ENCODE measurements at regions of chr15 and their contacts with region 1.

Region 1: GRCh38 chr15:78872972-78873792 is 492 bp downstream of the MORF4L1 start:
- DNase-seq: peak; percentile 96
- ATAC-seq: peak; percentile 76
- H3K4me3 Mint-ChIP-seq: peak overlapping the region; percentile 89
- H3K27ac Mint-ChIP-seq: peak overlapping the region; percentile 100
- H3K4me1 Mint-ChIP-seq: peaks cover 30% of the 10 kb centered on the region
- H3K27me3 Mint-ChIP-seq: no peaks in the 10 kb centered on the region
- CTCF ChIP-seq: peak; percentile 29

Region 2: DNA sequence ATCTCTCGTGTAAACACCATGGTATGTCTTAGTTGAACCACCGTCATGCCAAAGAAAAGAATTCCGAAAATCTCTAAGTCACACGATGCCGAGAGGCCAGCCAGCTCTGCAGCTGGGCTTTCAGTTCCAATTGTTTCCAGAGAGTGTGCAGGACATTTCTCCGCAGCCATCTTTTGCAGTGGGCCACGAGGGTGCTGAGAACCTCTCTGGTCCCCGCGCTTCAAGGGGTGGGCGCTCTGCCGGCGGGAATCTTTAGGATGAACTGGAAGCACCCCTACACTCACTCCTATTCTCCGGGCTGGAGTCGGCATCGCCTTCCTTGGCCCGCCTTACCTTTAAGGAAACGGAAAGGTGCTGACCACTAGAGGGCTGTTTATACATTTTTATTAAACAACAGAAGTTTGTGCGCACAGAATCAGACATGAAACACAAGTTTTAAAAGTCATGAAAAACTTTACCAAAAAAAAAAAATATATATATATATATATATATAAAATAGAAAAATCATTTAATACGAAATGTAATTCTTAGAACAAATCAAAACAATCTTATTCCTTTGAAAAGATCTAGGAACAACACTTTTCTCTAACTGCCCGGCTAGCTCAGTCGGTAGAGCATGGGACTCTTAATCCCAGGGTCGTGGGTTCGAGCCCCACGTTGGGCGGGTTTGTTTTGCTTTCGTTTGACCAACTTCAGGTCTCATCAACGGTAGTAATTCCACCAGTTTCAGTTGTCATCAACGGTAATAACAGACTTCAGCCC is 13.0 kb before region 1 on chr15:
- CTCF ChIA-PET with region 1: interaction called, 15 read pairs
- POLR2A ChIA-PET with region 1: interaction called, 5 read pairs
- intact Hi-C with region 1: no loop called
- DNase-seq: peak; percentile 91
- ATAC-seq: peak; percentile 94
- H3K4me3 Mint-ChIP-seq: peak overlapping the region; percentile 84
- H3K27ac Mint-ChIP-seq: peak overlapping the region; percentile 84
- H3K4me1 Mint-ChIP-seq: peaks cover 5% of the 10 kb centered on the region
- H3K27me3 Mint-ChIP-seq: no peaks in the 10 kb centered on the region
- CTCF ChIP-seq: peak; percentile 73

Measured in activated CD8-positive, alpha-beta T cell treated with anti-CD3 and anti-CD28 coated beads for 36 hours (primary cell).